ENCODE measurements at regions of chr5 and their contacts with region 1.

Region 1: GRCh38 chr5:139574641-139575312 is 13.6 kb downstream of the UBE2D2 start:
- DNase-seq: peak; percentile 24
- H3K4me3 Mint-ChIP-seq: no peak overlapping the region
- H3K27ac Mint-ChIP-seq: no peak overlapping the region
- H3K4me1 Mint-ChIP-seq: peaks cover 27% of the 10 kb centered on the region
- H3K27me3 Mint-ChIP-seq: no peaks in the 10 kb centered on the region
- CTCF ChIP-seq: peak; percentile 74

Region 2: DNA sequence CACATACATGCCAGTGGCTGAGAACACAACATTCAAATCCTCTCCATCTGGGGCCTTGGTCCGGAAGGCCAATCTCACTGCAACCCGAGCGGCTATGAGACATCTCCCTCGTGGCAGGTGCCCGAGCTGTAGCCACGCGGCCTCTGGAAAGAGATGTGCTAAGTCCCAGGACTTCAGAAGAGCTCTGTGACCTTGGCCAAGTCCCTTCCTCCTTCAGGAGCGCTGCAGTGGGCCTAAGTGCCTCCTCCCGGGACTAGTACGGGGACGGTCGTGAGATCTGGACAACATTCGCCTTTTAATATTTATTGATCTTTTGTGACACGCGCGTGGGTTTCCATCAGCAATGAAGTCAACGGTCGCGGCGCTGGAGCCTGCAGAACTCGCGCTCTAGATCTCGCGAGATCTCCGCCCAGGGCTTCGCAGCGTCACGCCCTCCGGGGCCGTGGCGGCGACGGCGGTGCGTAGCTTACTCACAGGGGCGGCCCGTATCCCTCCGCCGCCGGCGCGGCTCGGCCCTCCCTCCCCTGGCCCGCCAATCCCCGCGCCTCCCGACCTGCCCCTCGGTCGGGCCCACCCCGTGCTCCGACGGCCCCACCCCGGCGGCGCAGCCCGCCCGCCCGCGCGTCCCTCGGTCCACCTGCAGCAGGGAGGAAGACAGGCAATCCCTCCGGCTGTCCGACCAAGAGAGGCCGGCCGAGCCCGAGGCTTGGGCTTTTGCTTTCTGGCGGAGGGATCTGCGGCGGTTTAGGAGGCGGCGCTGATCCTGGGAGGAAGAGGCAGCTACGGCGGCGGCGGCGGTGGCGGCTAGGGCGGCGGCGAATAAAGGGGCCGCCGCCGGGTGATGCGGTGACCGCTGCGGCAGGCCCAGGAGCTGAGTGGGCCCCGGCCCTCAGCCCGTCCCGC is 13.8 kb before region 1 on chr5 and contains the start of gene UBE2D2:
- CTCF ChIA-PET with region 1: interaction called, 12 read pairs
- intact Hi-C with region 1: no loop called
- DNase-seq: peak; percentile 99
- H3K4me3 Mint-ChIP-seq: peak within 1 kb of the TSS; percentile 86
- H3K27ac Mint-ChIP-seq: peak within 1 kb of the TSS; percentile 98
- H3K4me1 Mint-ChIP-seq: peaks cover 18% of the 10 kb centered on the region
- H3K27me3 Mint-ChIP-seq: no peaks in the 10 kb centered on the region
- CTCF ChIP-seq: no peak
- total RNA-seq, gene UBE2D2: 179 and 187 TPM in 2 replicates

Region 3: DNA sequence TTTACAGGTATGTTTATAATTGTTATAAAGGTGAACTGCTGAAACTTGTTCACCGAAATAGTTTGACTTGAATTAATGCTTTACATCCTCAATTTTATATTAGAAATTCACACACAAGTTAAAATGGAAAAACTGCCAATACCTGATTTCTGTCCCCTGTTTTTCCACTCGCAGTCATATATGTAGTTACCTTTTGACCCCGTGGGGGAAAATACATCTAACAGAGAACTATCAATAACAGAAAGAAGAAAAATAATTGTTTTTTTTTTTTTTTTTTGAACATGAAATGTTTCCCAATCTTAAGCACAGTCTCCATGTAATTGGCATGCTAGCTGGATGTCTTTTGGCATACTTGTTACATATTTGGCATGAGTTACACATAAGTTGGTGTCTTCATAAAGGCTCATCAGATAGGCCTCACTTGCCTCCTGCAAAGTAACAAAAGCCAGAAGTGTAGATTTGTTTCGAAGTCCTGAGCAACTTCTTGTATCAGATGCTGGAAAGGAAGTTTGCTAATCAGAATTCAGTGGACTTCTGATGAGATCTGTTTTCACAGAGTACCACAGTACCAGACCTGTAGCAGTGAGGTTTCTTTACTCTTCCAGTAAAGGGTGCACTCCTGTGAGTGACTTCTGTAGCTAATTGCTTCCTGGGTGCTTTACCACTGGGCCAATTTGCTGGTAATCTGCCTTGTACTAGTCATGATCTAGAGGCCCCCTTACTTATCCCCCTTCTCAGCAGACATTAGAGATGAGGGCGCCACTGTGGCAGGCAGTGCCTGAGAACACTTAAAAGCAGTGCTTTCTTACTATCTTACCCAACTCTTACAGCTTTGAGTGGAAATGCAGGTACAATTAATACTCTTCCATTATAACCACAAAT is 37.2 kb after region 1 on chr5:
- CTCF ChIA-PET with region 1: interaction called, 3 read pairs
- intact Hi-C with region 1: loop called (anchors 2 kb)
- DNase-seq: no peak
- H3K4me3 Mint-ChIP-seq: no peak overlapping the region
- H3K27ac Mint-ChIP-seq: no peak overlapping the region
- H3K4me1 Mint-ChIP-seq: no peaks in the 10 kb centered on the region
- H3K27me3 Mint-ChIP-seq: no peaks in the 10 kb centered on the region
- CTCF ChIP-seq: no peak